ENCODE measurements at regions of chr9 and their contacts with region 1.

Region 1: GRCh38 chr9:103942651-103943050 is 151.5 kb upstream of the SMC2 start:
- DNase-seq: no peak
- H3K4me3 ChIP-seq: no peak overlapping the region
- H3K4me3 Mint-ChIP-seq: no peak overlapping the region
- H3K27ac ChIP-seq: no peak overlapping the region
- H3K27ac Mint-ChIP-seq: no peak overlapping the region
- H3K4me1 ChIP-seq: no peaks in the 10 kb centered on the region
- H3K4me1 Mint-ChIP-seq: no peaks in the 10 kb centered on the region
- H3K27me3 ChIP-seq: no peaks in the 10 kb centered on the region
- H3K27me3 Mint-ChIP-seq: peaks cover 0 to 2% (median 0%) of the 10 kb centered on the region in 3 donors
- CTCF ChIP-seq: no peak

Region 2: DNA sequence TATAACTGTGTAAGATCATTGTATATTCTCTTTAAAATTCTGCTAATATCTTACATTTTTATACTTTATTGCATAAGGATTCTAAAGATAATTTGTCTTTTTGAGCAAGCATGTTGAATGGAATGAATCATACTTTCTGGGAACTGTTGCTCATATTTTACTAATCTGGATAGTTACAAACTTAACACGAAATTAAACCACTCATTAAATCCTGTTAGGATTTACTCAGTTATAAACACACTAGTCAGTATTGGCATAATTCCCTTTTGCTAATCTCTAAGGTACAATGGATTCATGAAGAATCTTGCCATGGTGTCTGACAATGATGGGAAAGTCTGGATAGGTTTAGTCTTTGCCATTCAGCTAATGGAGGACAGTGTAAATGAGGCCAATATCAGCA is 186.7 kb before region 1 on chr9:
- intact Hi-C with region 1: no loop called
- DNase-seq: no peak
- H3K4me3 ChIP-seq: no peak overlapping the region
- H3K4me3 Mint-ChIP-seq: no peak overlapping the region
- H3K27ac ChIP-seq: no peak overlapping the region
- H3K27ac Mint-ChIP-seq: no peak overlapping the region
- H3K4me1 ChIP-seq: no peaks in the 10 kb centered on the region
- H3K4me1 Mint-ChIP-seq: no peaks in the 10 kb centered on the region
- H3K27me3 ChIP-seq: no peaks in the 10 kb centered on the region
- H3K27me3 Mint-ChIP-seq: peaks cover 0 to 1% (median 0%) of the 10 kb centered on the region in 3 donors
- CTCF ChIP-seq: no peak

Region 3: DNA sequence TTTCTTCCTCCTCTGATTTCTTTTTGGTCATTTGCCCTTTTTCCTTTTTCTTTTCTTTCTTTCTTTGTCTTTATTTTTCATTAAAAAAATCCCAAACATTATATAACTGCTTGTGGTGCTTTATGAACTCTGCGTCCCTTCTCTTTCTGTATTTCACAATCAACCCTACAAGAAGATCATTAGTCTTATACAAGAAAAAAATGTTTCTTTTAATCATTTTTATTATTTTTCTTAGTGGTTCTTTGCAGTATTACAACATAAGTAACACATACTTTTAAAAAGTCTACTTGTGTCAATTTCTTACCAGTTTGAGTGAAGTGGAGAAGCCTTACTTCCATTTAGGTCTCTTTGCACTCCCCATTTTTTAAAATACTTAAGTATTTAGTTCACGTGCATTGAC is 61.2 kb before region 1 on chr9:
- intact Hi-C with region 1: loop called in 1 of 2 experiments (anchors 10 kb)
- DNase-seq: no peak
- H3K4me3 ChIP-seq: no peak overlapping the region
- H3K4me3 Mint-ChIP-seq: no peak overlapping the region
- H3K27ac ChIP-seq: no peak overlapping the region
- H3K27ac Mint-ChIP-seq: no peak overlapping the region
- H3K4me1 ChIP-seq: no peaks in the 10 kb centered on the region
- H3K4me1 Mint-ChIP-seq: no peaks in the 10 kb centered on the region
- H3K27me3 ChIP-seq: no peaks in the 10 kb centered on the region
- H3K27me3 Mint-ChIP-seq: no peaks in the 10 kb centered on the region
- CTCF ChIP-seq: no peak

Region 4: GRCh38 chr9:103904242-103904641 is 38.4 kb before region 1 on chr9:
- intact Hi-C with region 1: no loop called
- DNase-seq: no peak
- H3K4me3 ChIP-seq: no peak overlapping the region
- H3K4me3 Mint-ChIP-seq: no peak overlapping the region
- H3K27ac ChIP-seq: no peak overlapping the region
- H3K27ac Mint-ChIP-seq: peak overlapping the region in 1 of 7 donors; percentile 64
- H3K4me1 ChIP-seq: no peaks in the 10 kb centered on the region
- H3K4me1 Mint-ChIP-seq: no peaks in the 10 kb centered on the region
- H3K27me3 ChIP-seq: no peaks in the 10 kb centered on the region
- H3K27me3 Mint-ChIP-seq: no peaks in the 10 kb centered on the region
- CTCF ChIP-seq: no peak

Region 5: DNA sequence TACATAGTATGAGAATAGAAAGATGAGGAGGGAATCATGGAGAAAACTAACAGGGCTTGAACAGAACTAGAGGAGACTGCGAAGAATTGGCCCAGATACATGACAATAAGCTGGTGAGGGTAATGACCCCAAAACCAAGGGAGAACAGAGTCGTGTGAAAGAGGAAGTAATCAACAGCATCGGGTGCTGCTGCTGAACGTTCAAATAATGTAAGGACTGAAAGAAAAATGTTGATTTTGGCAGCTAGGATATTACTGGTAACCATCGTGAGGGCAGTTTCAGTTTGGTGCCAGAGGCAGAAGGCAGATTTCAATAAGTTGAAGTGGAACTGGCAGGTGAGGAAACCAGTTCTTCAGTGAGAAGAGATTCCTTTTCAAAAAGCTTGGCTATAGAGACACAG is 84.6 kb after region 1 on chr9:
- intact Hi-C with region 1: no loop called
- DNase-seq: no peak
- H3K4me3 ChIP-seq: no peak overlapping the region
- H3K4me3 Mint-ChIP-seq: no peak overlapping the region
- H3K27ac ChIP-seq: no peak overlapping the region
- H3K27ac Mint-ChIP-seq: no peak overlapping the region
- H3K4me1 ChIP-seq: no peaks in the 10 kb centered on the region
- H3K4me1 Mint-ChIP-seq: no peaks in the 10 kb centered on the region
- H3K27me3 ChIP-seq: no peaks in the 10 kb centered on the region
- H3K27me3 Mint-ChIP-seq: no peaks in the 10 kb centered on the region
- CTCF ChIP-seq: no peak

Measured in CD14-positive monocyte (primary cell).